Naive thymus-derived CD4-positive, alpha-beta T cell (primary cell): ENCODE measurements at regions of chr10 and their contacts with region 1.

Region 1: DNA sequence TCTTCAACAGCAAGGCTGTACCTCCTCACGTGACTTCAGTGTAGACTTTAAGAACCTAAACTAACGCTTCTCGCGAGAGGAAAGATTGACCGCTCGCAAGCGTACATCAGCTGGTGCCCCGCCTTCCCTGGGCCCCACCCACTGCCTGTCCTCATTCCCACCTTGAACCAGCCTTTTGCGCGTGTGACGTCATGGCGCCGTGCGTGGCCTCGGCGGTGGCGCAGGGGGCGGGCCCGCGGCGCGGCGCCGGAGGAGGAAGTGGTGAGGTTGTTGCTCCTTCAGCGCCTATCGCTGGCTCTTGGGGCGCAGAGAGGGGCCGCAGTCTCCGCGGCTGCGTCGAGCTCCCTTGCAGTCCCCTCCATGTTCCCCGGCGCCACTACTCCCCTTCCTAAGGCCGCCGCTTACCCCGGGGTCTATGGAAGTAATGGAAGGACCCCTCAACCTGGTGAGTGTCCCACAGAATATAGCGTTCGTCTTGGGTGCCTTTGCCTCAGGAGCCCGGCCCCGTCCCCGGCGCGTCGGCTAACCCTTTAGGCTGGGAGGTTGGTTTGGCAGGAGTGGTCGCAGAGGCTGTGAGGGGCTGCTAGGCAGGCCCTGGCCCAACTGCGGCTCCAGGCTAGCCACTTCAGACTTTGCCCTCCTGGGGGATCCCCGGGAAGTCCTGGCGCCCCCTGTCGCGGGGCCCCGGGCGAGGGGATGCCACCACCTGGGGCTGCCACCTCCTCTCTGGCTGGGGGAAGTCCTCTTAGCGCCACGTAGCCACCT is at the start of gene NRBF2:
- DNase-seq: peak; percentile 96 to 98 (median 98)
- ATAC-seq: peak; percentile 94
- H3K4me3 ChIP-seq: peak within 1 kb of the TSS; percentile 81
- H3K4me3 Mint-ChIP-seq: peak within 1 kb of the TSS; percentile 75 to 94 (median 92)
- H3K27ac ChIP-seq: peak within 1 kb of the TSS; percentile 98
- H3K27ac Mint-ChIP-seq: peak within 1 kb of the TSS; percentile 89 to 98 (median 96)
- H3K4me1 ChIP-seq: peaks cover 17 to 30% of the 10 kb centered on the region in 2 donors
- H3K4me1 Mint-ChIP-seq: peaks cover 10 to 49% (median 32%) of the 10 kb centered on the region in 7 donors
- H3K27me3 ChIP-seq: no peaks in the 10 kb centered on the region
- H3K27me3 Mint-ChIP-seq: no peaks in the 10 kb centered on the region
- total RNA-seq, gene NRBF2: 14.5 to 26.0 (median 19.2) TPM

Region 2: GRCh38 chr10:62268399-62269114 is 864.7 kb before region 1 on chr10 and contains the start of gene RTKN2:
- CTCF ChIA-PET with region 1: no interaction called
- POLR2A ChIA-PET with region 1: no interaction called
- intact Hi-C with region 1: loop called in 1 of 2 experiments (anchors 1 kb)
- DNase-seq: peak; percentile 52 to 76 (median 64)
- ATAC-seq: peak; percentile 89
- H3K4me3 ChIP-seq: peak within 1 kb of the TSS; percentile 69
- H3K4me3 Mint-ChIP-seq: peak within 1 kb of the TSS; percentile 84 to 96 (median 88)
- H3K27ac ChIP-seq: peak within 1 kb of the TSS; percentile 12
- H3K27ac Mint-ChIP-seq: peak within 1 kb of the TSS in 8 of 9 donors; percentile 8 to 75 (median 46)
- H3K4me1 ChIP-seq: peaks cover 0 to 5% of the 10 kb centered on the region in 2 donors
- H3K4me1 Mint-ChIP-seq: peaks cover 9 to 19% (median 14%) of the 10 kb centered on the region in 7 donors
- H3K27me3 ChIP-seq: peaks cover 0 to 9% of the 10 kb centered on the region in 2 donors
- H3K27me3 Mint-ChIP-seq: peaks cover 4 to 43% (median 16%) of the 10 kb centered on the region in 5 donors
- total RNA-seq, gene RTKN2: 1.4 to 7.8 (median 3.0) TPM

Region 3: DNA sequence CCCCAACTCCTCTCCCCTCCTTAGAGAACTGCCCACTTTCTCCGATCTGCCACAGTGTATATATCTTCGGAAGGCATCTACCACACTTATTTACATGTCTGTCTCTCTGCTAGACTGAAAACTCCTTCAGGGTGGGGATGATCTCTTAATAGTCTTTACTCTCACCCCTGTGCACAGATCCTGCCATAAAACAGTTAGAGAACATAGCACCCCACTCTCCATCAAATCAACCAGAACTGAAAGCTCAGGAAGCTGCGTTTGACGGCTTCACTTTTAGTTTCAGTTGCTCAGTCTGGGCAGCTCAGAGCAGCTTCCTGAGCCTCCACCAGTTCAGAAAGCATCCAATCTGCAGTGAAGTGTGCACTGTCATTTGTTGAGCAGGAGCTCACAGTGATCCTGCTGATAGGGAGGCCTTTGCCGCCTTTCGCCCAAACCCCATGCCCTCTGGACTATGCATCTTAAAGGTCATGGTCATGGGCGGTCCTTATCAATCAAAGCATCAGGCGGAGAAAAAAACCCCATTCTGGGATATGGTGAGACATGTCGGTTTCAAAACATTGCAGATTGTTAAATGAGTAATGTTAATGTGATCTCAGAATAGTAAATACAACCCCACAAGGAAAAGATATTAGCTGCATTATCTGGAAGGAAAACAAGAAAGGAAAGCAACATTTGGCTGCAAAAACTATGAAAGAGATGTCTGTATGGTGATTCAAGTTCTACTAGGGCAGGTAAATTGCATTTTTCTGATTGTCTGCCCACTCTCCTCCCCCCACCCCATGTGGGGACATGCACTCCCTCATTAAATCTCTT is 495.8 kb before region 1 on chr10:
- CTCF ChIA-PET with region 1: no interaction called
- POLR2A ChIA-PET with region 1: interaction called, 4 read pairs
- intact Hi-C with region 1: loop called (anchors 1 kb)
- DNase-seq: peak; percentile 32 to 82 (median 75)
- ATAC-seq: peak; percentile 86
- H3K4me3 ChIP-seq: peak overlapping the region; percentile 67
- H3K4me3 Mint-ChIP-seq: no peak overlapping the region
- H3K27ac ChIP-seq: peak overlapping the region; percentile 70
- H3K27ac Mint-ChIP-seq: no peak overlapping the region
- H3K4me1 ChIP-seq: peaks cover 18 to 41% of the 10 kb centered on the region in 2 donors
- H3K4me1 Mint-ChIP-seq: peaks cover 2 to 38% (median 6%) of the 10 kb centered on the region in 7 donors
- H3K27me3 ChIP-seq: no peaks in the 10 kb centered on the region
- H3K27me3 Mint-ChIP-seq: no peaks in the 10 kb centered on the region

Region 4: GRCh38 chr10:62851442-62851841 is 281.8 kb before region 1 on chr10:
- CTCF ChIA-PET with region 1: no interaction called
- POLR2A ChIA-PET with region 1: no interaction called
- intact Hi-C with region 1: loop called in 1 of 2 experiments (anchors 5 kb)
- DNase-seq: no peak
- ATAC-seq: no peak
- H3K4me3 ChIP-seq: no peak overlapping the region
- H3K4me3 Mint-ChIP-seq: no peak overlapping the region
- H3K27ac ChIP-seq: no peak overlapping the region
- H3K27ac Mint-ChIP-seq: no peak overlapping the region
- H3K4me1 ChIP-seq: peaks cover 0 to 39% of the 10 kb centered on the region in 2 donors
- H3K4me1 Mint-ChIP-seq: peaks cover 10 to 54% (median 14%) of the 10 kb centered on the region in 7 donors
- H3K27me3 ChIP-seq: no peaks in the 10 kb centered on the region
- H3K27me3 Mint-ChIP-seq: peaks cover 0 to 18% (median 13%) of the 10 kb centered on the region in 5 donors

Region 5: DNA sequence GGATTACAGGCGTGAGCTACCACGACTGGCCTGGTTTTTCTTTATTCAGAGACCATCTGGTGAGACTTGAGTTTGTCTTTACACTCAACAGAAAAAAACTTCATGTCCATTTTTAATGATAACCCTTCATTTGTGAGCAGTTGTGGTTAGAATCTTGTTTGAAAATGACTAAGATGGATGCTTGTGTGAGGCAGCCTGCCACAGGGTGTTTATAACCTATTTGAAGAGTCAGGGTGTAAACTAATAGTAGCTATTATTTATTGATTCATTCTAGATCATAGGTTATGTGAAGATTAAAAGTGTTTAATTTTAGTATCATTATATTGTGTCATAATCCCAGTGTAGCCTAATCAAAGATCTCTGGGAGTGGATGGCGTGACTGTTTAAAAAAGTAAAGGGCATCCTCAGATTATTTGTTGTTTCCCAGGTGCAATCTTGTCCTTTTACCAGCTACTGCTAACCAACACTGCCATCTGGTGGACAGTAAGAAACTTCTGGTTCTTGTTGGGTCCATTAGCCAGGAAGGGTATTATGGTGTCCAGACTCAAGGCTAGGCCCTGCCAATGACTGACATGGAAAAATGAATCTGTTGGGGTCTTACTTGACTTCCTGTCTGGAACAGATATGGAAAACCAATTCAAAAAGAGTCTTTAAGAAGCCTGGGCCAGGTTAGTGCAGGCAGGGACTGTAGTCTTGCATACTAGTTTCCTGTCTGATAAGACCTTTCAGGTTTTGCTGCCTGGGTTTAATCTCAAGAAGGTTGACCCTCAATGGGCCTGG is 24.8 kb after region 1 on chr10:
- CTCF ChIA-PET with region 1: interaction called, 5 read pairs
- POLR2A ChIA-PET with region 1: interaction called, 7 read pairs
- intact Hi-C with region 1: loop called (anchors 1 kb)
- DNase-seq: peak in 7 of 9 donors; percentile 43 to 71 (median 65)
- ATAC-seq: peak; percentile 84
- H3K4me3 ChIP-seq: no peak overlapping the region
- H3K4me3 Mint-ChIP-seq: no peak overlapping the region
- H3K27ac ChIP-seq: no peak overlapping the region
- H3K27ac Mint-ChIP-seq: peak overlapping the region in 2 of 9 donors; percentile 2 to 30
- H3K4me1 ChIP-seq: no peaks in the 10 kb centered on the region
- H3K4me1 Mint-ChIP-seq: peaks cover 6 to 18% (median 11%) of the 10 kb centered on the region in 7 donors
- H3K27me3 ChIP-seq: no peaks in the 10 kb centered on the region
- H3K27me3 Mint-ChIP-seq: no peaks in the 10 kb centered on the region

Region 6: DNA sequence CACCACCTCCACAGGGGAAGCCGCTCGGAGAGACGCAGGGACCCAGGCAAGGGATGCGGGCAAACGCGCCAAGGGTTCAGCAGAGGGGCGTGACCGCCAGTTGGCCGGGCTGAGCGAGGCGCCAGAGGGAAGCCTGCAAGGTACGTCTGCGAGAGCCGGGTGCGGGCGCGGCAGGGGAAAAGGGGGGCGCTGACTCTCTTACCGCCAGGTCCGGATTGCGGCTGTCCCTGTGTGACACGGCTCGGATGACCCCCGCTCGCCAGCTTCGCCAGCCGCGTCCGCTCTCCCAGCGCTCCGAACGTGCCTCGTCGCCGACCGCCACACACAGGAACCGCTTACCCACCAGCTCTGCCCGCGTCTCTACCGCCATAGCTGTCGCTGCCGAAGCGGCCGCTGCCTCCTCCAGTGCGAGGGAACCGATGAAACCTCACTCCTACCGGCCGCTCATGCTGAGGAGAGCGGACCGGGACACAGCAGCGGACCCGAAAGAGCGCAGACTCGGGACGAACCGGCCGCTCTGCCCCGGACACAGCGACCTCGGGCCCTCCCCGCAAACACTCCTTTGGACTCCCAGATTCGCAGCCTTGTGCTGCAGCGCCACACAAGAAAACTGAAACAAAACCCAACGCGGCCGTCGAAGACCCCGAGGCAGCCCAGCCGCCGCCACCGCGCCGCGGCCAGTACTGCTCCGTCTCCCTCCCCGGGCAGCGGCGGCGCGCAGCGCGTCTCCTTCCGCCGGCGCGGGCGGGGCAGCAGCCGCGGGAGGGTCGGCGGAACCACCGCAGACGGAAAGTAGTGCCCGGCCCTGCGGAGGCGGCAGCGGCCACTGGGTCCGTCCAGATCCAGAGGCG is 332.3 kb after region 1 on chr10 and contains the start of gene JMJD1C:
- CTCF ChIA-PET with region 1: no interaction called
- POLR2A ChIA-PET with region 1: no interaction called
- intact Hi-C with region 1: loop called in 1 of 2 experiments (anchors 1 kb)
- DNase-seq: peak; percentile 49 to 72 (median 63)
- ATAC-seq: peak; percentile 85
- H3K4me3 ChIP-seq: peak within 1 kb of the TSS; percentile 89
- H3K4me3 Mint-ChIP-seq: peak within 1 kb of the TSS; percentile 88 to 98 (median 95)
- H3K27ac ChIP-seq: peak within 1 kb of the TSS; percentile 86
- H3K27ac Mint-ChIP-seq: peak within 1 kb of the TSS; percentile 68 to 97 (median 94)
- H3K4me1 ChIP-seq: peaks cover 0 to 16% of the 10 kb centered on the region in 2 donors
- H3K4me1 Mint-ChIP-seq: peaks cover 14 to 68% (median 34%) of the 10 kb centered on the region in 7 donors
- H3K27me3 ChIP-seq: no peaks in the 10 kb centered on the region
- H3K27me3 Mint-ChIP-seq: peaks cover 0 to 31% (median 0%) of the 10 kb centered on the region in 5 donors
- total RNA-seq, gene JMJD1C: 67.6 to 331 (median 137) TPM

Region 7: DNA sequence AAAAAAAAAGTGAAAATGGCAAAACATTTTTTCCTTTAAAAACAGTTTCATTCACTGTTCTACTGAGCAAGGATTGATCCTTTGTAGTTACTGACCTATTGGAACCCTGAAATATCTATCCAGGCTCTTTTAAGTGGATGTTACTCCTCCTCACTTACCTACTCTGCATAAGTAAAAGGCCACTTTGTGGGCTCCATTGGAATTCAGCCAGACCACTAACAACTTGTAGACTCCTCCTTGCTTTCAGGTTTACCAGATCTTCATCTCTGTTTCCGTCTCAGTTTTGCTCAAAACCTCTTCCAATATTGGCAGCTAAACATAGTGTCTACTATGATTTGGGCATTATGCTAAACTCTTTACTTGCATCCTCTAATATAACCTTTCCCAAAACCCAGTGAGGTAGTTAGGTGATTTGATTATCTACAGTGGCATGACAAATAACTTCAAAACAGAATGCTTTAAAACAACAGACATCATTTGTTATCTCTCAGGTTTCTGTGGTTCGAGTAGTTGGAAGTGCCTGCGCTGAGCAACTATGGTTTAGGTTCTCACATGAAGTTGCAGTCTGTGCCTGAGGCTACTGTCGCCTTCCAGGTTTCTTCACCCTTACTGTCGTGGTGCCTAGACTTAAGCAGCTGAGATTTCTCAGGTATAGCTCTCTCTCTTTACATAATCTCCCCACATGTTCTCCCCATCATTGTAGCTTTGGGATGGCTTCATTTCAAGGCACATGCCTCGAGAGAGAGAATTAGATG is 1086.2 kb after region 1 on chr10:
- CTCF ChIA-PET with region 1: no interaction called
- POLR2A ChIA-PET with region 1: no interaction called
- intact Hi-C with region 1: no loop called
- DNase-seq: no peak
- ATAC-seq: no peak
- H3K4me3 ChIP-seq: no peak overlapping the region
- H3K4me3 Mint-ChIP-seq: no peak overlapping the region
- H3K27ac ChIP-seq: no peak overlapping the region
- H3K27ac Mint-ChIP-seq: no peak overlapping the region
- H3K4me1 ChIP-seq: no peaks in the 10 kb centered on the region
- H3K4me1 Mint-ChIP-seq: no peaks in the 10 kb centered on the region
- H3K27me3 ChIP-seq: no peaks in the 10 kb centered on the region
- H3K27me3 Mint-ChIP-seq: no peaks in the 10 kb centered on the region